OCI-LY7 (cell line): ENCODE measurements at regions of chr18 and their contacts with region 1.

Region 1: GRCh38 chr18:11215216-11215615 is 65.8 kb upstream of the PIEZO2 start:
- DNase-seq: no peak
- H3K4me3 ChIP-seq: no peak overlapping the region
- H3K27ac ChIP-seq: no peak overlapping the region
- H3K4me1 ChIP-seq: no peaks in the 10 kb centered on the region
- CTCF ChIP-seq: no peak

Region 2: GRCh38 chr18:10950876-10951630 is 264.2 kb before region 1 on chr18:
- CTCF ChIA-PET with region 1: no interaction called
- POLR2A ChIA-PET with region 1: no interaction called
- intact Hi-C with region 1: no loop called
- DNase-seq: peak; percentile 88
- H3K4me3 ChIP-seq: peak overlapping the region; percentile 66
- H3K27ac ChIP-seq: peak overlapping the region; percentile 99
- H3K4me1 ChIP-seq: peaks cover 71% of the 10 kb centered on the region
- CTCF ChIP-seq: no peak

Region 3: DNA sequence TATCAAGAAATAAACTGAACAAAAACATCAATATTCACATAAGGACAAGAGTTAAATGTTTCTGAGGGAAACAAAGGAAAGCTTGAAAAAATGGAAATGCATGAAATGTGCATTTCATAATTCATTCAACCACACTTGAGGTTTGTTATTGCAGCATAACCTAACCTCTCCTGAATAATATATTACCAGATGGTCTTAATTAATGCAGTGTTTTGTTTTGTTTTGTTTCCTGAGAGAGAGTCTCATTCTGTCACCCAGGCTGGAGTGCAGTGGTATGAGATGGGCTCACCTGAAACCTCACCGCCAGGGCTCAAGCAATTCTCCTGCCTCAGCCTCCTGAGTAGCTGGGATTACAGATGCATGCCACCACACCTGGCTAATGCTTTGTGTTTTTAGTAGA is 74.0 kb after region 1 on chr18:
- CTCF ChIA-PET with region 1: no interaction called
- POLR2A ChIA-PET with region 1: no interaction called
- intact Hi-C with region 1: loop called (anchors 2 kb)
- DNase-seq: no peak
- H3K4me3 ChIP-seq: no peak overlapping the region
- H3K27ac ChIP-seq: no peak overlapping the region
- H3K4me1 ChIP-seq: no peaks in the 10 kb centered on the region
- CTCF ChIP-seq: no peak

Region 4: GRCh38 chr18:11324956-11325873 is 110.0 kb after region 1 on chr18:
- CTCF ChIA-PET with region 1: no interaction called
- POLR2A ChIA-PET with region 1: no interaction called
- intact Hi-C with region 1: no loop called
- DNase-seq: no peak
- H3K4me3 ChIP-seq: no peak overlapping the region
- H3K27ac ChIP-seq: no peak overlapping the region
- H3K4me1 ChIP-seq: no peaks in the 10 kb centered on the region
- CTCF ChIP-seq: no peak